ENCODE measurements at regions of chr4 and their contacts with region 1.

Region 1: GRCh38 chr4:78661921-78662521 is 110.5 kb downstream of the ANXA3 start:
- DNase-seq: peak; percentile 77
- ATAC-seq: peak; percentile 90
- H3K4me3 ChIP-seq: no peak overlapping the region
- H3K27ac ChIP-seq: no peak overlapping the region
- H3K4me1 ChIP-seq: peaks cover 33% of the 10 kb centered on the region
- H3K27me3 ChIP-seq: peaks cover 0 to 1% of the 10 kb centered on the region in 2 experiments; a peak in 1 of 4 replicates
- CTCF ChIP-seq: no peak
- EP300 ChIP-seq: peak in 1 of 2 experiments; percentile 64; a peak in 1 of 4 replicates
- POLR2A ChIP-seq: no peak
- RAD21 ChIP-seq: no peak

Region 2: DNA sequence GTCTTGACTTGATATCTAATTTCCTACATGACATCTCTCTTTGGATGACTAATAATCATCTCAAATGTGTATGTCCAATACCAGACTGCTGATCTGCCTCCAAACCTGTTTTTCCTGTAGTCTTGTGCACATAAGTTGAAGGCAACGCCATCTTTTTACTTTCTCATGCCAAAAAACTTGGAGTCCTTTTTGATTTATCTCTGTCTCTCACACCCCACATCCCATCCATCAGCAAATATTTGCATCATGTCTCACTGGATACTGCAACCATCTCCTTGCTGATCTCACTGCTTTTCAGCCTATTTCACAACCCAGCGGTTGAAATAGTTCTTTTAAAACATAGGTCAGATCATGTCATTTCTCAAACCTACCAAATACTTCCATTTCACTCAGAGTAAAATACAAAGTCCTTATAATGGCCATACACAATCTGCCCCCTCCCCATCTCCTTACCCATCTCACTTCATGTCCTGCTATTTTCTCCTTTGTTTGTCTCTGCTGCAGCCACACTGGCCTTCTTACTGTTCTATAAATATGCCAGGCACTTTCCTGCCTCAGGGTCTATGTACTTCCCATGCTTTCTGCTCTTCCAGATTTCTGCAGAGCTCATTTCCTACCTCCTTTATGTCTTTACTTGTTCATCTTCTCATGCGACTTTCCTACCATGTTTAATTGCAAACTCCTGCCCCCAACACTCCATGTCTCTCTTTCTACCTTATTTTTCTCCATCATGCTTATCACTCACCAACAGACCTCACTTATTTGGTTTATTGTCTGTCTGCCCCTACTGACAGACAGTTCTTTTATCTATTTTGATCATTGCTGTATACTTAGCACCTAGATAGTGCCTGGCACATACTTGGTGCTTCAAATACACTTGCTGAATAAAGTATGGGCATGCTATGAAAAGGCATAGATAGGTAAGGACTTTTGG is 11.7 kb before region 1 on chr4:
- CTCF ChIA-PET with region 1: interaction called, 15 read pairs
- POLR2A ChIA-PET with region 1: no interaction called
- RAD21 ChIA-PET with region 1: interaction called, 14 read pairs
- SMC1A ChIA-PET with region 1: interaction called, 18 read pairs
- in situ Hi-C with region 1: no loop called
- intact Hi-C with region 1: no loop called
- DNase-seq: no peak
- ATAC-seq: no peak
- H3K4me3 ChIP-seq: no peak overlapping the region
- H3K27ac ChIP-seq: no peak overlapping the region
- H3K4me1 ChIP-seq: peaks cover 4% of the 10 kb centered on the region; the same call in 1 of the 2 replicates
- H3K27me3 ChIP-seq: no peaks in the 10 kb centered on the region
- CTCF ChIP-seq: no peak
- EP300 ChIP-seq: no peak
- POLR2A ChIP-seq: no peak
- RAD21 ChIP-seq: no peak

Region 3: DNA sequence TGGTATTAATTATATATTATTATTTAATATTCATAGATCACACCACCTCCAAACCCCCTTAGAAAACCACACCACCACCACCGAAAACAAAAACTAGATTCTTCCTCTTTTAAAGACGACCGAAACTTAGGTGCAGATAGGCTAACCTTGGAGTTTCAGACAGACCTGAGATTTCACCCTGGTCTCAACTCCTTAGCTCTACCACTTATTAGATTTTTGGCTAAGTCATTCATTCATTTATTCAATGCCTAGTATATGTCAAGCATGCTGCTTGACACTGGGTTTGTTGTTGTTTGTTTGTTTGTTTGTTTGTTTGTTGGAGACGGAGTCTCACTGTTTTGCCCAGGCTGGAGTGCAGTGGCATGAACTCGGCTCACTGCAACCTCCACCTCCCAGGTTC is 104.6 kb after region 1 on chr4:
- CTCF ChIA-PET with region 1: no interaction called
- POLR2A ChIA-PET with region 1: no interaction called
- RAD21 ChIA-PET with region 1: interaction called, 7 read pairs
- SMC1A ChIA-PET with region 1: interaction called, 15 read pairs
- in situ Hi-C with region 1: no loop called
- intact Hi-C with region 1: no loop called
- DNase-seq: no peak
- ATAC-seq: peak; percentile 92
- H3K4me3 ChIP-seq: peak overlapping the region; percentile 14; the same call in 1 of the 2 replicates
- H3K27ac ChIP-seq: no peak overlapping the region
- H3K4me1 ChIP-seq: peaks cover 27% of the 10 kb centered on the region
- H3K27me3 ChIP-seq: no peaks in the 10 kb centered on the region
- CTCF ChIP-seq: no peak
- EP300 ChIP-seq: no peak
- POLR2A ChIP-seq: no peak
- RAD21 ChIP-seq: no peak

Region 4: DNA sequence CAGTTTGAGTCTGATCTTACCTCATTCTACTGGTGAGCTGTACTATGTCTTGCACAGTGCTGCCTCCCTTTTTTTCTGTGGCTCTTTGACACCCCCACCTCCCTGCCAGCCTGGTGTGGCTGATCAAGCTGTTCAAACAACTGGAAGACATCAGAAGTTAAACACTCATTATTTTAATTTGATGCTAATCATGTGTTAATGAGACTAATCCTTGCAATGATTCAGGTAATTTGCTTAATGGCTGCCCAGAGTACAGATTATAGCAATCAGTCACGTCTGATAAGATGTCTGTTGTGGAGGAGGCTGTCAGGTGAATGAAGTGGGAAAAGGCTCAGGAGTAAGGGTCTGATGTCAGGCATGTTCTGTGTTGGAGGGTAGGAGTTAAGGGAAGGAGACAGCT is 833.4 kb after region 1 on chr4:
- CTCF ChIA-PET with region 1: no interaction called
- POLR2A ChIA-PET with region 1: no interaction called
- RAD21 ChIA-PET with region 1: no interaction called
- SMC1A ChIA-PET with region 1: no interaction called
- in situ Hi-C with region 1: no loop called
- intact Hi-C with region 1: no loop called
- DNase-seq: no peak
- ATAC-seq: no peak
- H3K4me3 ChIP-seq: no peak overlapping the region
- H3K27ac ChIP-seq: no peak overlapping the region
- H3K4me1 ChIP-seq: no peaks in the 10 kb centered on the region
- H3K27me3 ChIP-seq: no peaks in the 10 kb centered on the region
- CTCF ChIP-seq: no peak
- EP300 ChIP-seq: no peak
- POLR2A ChIP-seq: no peak
- RAD21 ChIP-seq: no peak